ENCODE measurements at regions of chr5 and their contacts with region 1.

Region 1: GRCh38 chr5:138035605-138036537 is 3.0 kb upstream of the FAM13B start:
- DNase-seq: peak; percentile 40 to 74 (median 73)
- H3K4me3 ChIP-seq: no peak overlapping the region
- H3K4me3 Mint-ChIP-seq: peak overlapping the region; percentile 0 to 80 (median 21)
- H3K27ac ChIP-seq: no peak overlapping the region
- H3K27ac Mint-ChIP-seq: peak overlapping the region in 7 of 8 donors; percentile 41 to 86 (median 75)
- H3K4me1 ChIP-seq: peaks cover 25% of the 10 kb centered on the region
- H3K4me1 Mint-ChIP-seq: peaks cover 23 to 30% (median 28%) of the 10 kb centered on the region in 3 donors
- H3K27me3 ChIP-seq: no peaks in the 10 kb centered on the region
- H3K27me3 Mint-ChIP-seq: no peaks in the 10 kb centered on the region

Region 2: GRCh38 chr5:138025285-138025684 is 10.6 kb before region 1 on chr5:
- CTCF ChIA-PET with region 1: interaction called, 18 read pairs
- POLR2A ChIA-PET with region 1: no interaction called
- DNase-seq: no peak
- H3K4me3 ChIP-seq: no peak overlapping the region
- H3K4me3 Mint-ChIP-seq: peak overlapping the region in 4 of 7 donors; percentile 32 to 55 (median 43)
- H3K27ac ChIP-seq: no peak overlapping the region
- H3K27ac Mint-ChIP-seq: peak overlapping the region in 5 of 8 donors; percentile 22 to 76 (median 52)
- H3K4me1 ChIP-seq: peaks cover 66% of the 10 kb centered on the region
- H3K4me1 Mint-ChIP-seq: peaks cover 83 to 95% (median 94%) of the 10 kb centered on the region in 3 donors
- H3K27me3 ChIP-seq: no peaks in the 10 kb centered on the region
- H3K27me3 Mint-ChIP-seq: no peaks in the 10 kb centered on the region

Region 3: DNA sequence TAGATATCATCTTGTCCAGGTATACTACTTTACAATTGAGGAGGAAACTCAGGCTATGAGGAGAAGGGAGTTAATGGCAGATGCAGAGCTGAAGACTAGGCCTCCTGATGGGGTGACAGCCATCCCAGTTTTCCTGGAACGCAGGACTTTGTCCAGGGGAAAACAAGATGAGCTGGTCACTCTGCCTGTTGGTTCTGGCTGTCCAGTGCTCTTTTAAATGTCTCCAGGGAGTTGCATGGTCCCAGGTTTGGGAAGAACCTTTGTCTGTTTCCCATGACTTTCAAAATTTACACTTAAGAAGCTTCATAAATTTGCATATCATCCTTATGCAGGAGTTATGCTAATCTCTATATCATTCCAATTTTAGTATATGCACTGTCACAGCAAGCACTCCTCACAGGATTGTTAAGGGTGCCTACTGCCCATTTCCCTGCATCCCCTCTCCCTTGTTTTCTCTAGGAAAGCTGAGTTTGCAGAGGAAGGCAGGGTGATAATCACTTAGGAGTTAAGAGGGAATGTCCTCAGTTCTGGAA is 33.3 kb after region 1 on chr5:
- CTCF ChIA-PET with region 1: interaction called, 34 read pairs
- POLR2A ChIA-PET with region 1: no interaction called
- DNase-seq: no peak
- H3K4me3 ChIP-seq: no peak overlapping the region
- H3K4me3 Mint-ChIP-seq: no peak overlapping the region
- H3K27ac ChIP-seq: no peak overlapping the region
- H3K27ac Mint-ChIP-seq: no peak overlapping the region
- H3K4me1 ChIP-seq: no peaks in the 10 kb centered on the region
- H3K4me1 Mint-ChIP-seq: peaks cover 5 to 6% (median 6%) of the 10 kb centered on the region in 3 donors
- H3K27me3 ChIP-seq: no peaks in the 10 kb centered on the region
- H3K27me3 Mint-ChIP-seq: no peaks in the 10 kb centered on the region

Region 4: GRCh38 chr5:138077065-138077696 is 41.3 kb after region 1 on chr5:
- CTCF ChIA-PET with region 1: interaction called, 13 read pairs
- POLR2A ChIA-PET with region 1: no interaction called
- DNase-seq: peak in 4 of 5 donors; percentile 24 to 64 (median 34)
- H3K4me3 ChIP-seq: no peak overlapping the region
- H3K4me3 Mint-ChIP-seq: peak overlapping the region in 1 of 7 donors; percentile 48
- H3K27ac ChIP-seq: no peak overlapping the region
- H3K27ac Mint-ChIP-seq: no peak overlapping the region
- H3K4me1 ChIP-seq: no peaks in the 10 kb centered on the region
- H3K4me1 Mint-ChIP-seq: peaks cover 0 to 13% (median 3%) of the 10 kb centered on the region in 3 donors
- H3K27me3 ChIP-seq: no peaks in the 10 kb centered on the region
- H3K27me3 Mint-ChIP-seq: no peaks in the 10 kb centered on the region

Region 5: DNA sequence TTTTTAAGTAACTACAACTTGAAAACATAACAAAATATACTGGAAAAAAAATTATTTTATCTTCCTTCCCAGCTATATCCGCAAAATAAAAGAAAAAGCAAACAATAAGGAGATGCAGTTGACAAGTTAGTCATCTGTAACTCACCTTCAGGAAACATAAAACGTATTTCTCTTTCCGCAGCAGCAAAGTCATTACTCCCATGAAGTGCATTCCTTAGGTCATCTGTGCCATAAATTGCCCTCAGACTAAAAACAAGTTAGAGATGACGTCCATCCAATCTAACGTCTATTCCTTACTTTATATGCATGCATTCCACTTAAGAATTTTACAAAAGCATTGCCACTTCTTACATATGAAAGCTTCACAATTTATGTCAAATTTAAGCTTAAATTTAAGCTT is 92.5 kb after region 1 on chr5:
- CTCF ChIA-PET with region 1: interaction called, 17 read pairs
- POLR2A ChIA-PET with region 1: interaction called, 3 read pairs
- DNase-seq: no peak
- H3K4me3 ChIP-seq: no peak overlapping the region
- H3K4me3 Mint-ChIP-seq: no peak overlapping the region
- H3K27ac ChIP-seq: no peak overlapping the region
- H3K27ac Mint-ChIP-seq: no peak overlapping the region
- H3K4me1 ChIP-seq: no peaks in the 10 kb centered on the region
- H3K4me1 Mint-ChIP-seq: peaks cover 0 to 2% (median 0%) of the 10 kb centered on the region in 3 donors
- H3K27me3 ChIP-seq: no peaks in the 10 kb centered on the region
- H3K27me3 Mint-ChIP-seq: peaks cover 3 to 13% of the 10 kb centered on the region in 2 donors